AG04449 (cell line): ENCODE measurements at regions of chr12 and their contacts with region 1.

Region 1: GRCh38 chr12:80195074-80195726 is 95.9 kb downstream of the OTOGL start:
- DNase-seq: no peak
- H3K4me3 ChIP-seq: no peak overlapping the region
- CTCF ChIP-seq: peak; percentile 88

Region 2: GRCh38 chr12:80205960-80206359 is 10.8 kb after region 1 on chr12:
- CTCF ChIA-PET with region 1: interaction called, 52 read pairs
- POLR2A ChIA-PET with region 1: no interaction called
- DNase-seq: no peak
- H3K4me3 ChIP-seq: no peak overlapping the region
- CTCF ChIP-seq: no peak

Region 3: GRCh38 chr12:80264386-80264785 is 69.2 kb after region 1 on chr12:
- CTCF ChIA-PET with region 1: interaction called, 403 read pairs
- POLR2A ChIA-PET with region 1: interaction called, 5 read pairs
- DNase-seq: no peak
- H3K4me3 ChIP-seq: no peak overlapping the region
- CTCF ChIP-seq: no peak

Region 4: DNA sequence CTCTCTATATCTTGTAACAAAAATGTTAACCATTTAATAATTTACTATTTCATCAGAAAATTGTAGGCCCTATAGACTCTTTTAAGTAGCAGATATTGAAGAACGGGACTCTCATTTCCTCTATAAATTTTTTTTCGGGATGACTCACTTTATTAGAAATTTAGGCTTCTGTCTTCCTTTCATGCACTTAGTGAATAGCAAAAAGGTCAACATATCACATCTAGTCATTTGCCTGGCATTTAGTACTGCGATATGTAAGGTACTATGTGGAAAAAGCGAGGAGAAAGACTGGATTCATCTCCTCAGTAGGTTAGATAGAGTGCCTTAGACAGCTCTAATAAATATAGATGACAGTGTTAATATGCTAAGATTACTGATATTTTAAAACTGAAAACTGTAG is 82.5 kb after region 1 on chr12:
- CTCF ChIA-PET with region 1: interaction called, 403 read pairs
- POLR2A ChIA-PET with region 1: no interaction called
- DNase-seq: no peak
- H3K4me3 ChIP-seq: no peak overlapping the region
- CTCF ChIP-seq: no peak

Region 5: GRCh38 chr12:80632835-80633234 is 437.6 kb after region 1 on chr12:
- CTCF ChIA-PET with region 1: no interaction called
- POLR2A ChIA-PET with region 1: no interaction called
- DNase-seq: no peak
- H3K4me3 ChIP-seq: no peak overlapping the region
- CTCF ChIP-seq: no peak

Region 6: GRCh38 chr12:80946594-80946993 is 751.4 kb after region 1 on chr12:
- CTCF ChIA-PET with region 1: interaction called, 13 read pairs
- POLR2A ChIA-PET with region 1: no interaction called
- DNase-seq: no peak
- H3K4me3 ChIP-seq: no peak overlapping the region
- CTCF ChIP-seq: peak; percentile 9

Region 7: GRCh38 chr12:81257947-81258551 is 1062.8 kb after region 1 on chr12:
- CTCF ChIA-PET with region 1: interaction called, 35 read pairs
- POLR2A ChIA-PET with region 1: no interaction called
- DNase-seq: no peak
- H3K4me3 ChIP-seq: no peak overlapping the region
- CTCF ChIP-seq: peak; percentile 38